Mammary epithelial cell (primary cell): ENCODE measurements at regions of chr13 and their contacts with region 1.

Region 1: DNA sequence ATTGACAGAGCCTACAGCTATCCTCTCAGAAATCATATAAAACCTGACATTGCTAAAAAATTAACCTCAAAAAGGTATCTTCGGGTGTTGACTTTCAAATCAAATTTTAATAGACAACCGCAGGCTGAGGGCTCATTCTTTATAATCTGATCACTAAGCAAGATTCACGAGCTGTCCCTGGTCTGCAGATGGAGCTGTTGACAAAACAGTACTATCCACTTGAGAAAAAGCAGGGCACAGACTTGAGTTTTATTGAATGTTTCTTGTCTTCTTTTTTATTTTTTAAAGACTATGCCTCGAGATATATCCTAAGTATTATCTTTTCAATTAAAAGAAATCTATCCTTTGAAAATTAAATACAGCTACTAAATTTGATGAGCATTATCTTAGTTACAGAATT is 540.5 kb downstream of the PCDH9 start:
- DNase-seq: no peak
- H3K4me3 ChIP-seq: no peak overlapping the region
- H3K27ac ChIP-seq: no peak overlapping the region
- H3K4me1 ChIP-seq: no peaks in the 10 kb centered on the region
- H3K27me3 ChIP-seq: no peaks in the 10 kb centered on the region
- CTCF ChIP-seq: peak; percentile 13 to 59

Region 2: GRCh38 chr13:65656740-65657329 is 1032.8 kb before region 1 on chr13:
- CTCF ChIA-PET with region 1: no interaction called
- dilution Hi-C with region 1: no loop called
- in situ Hi-C with region 1: no loop called
- intact Hi-C with region 1: loop called (anchors 10 kb)
- DNase-seq: no peak
- H3K4me3 ChIP-seq: no peak overlapping the region
- H3K27ac ChIP-seq: no peak overlapping the region
- H3K4me1 ChIP-seq: no peaks in the 10 kb centered on the region
- H3K27me3 ChIP-seq: no peaks in the 10 kb centered on the region
- CTCF ChIP-seq: peak; percentile 46 to 60

Region 3: DNA sequence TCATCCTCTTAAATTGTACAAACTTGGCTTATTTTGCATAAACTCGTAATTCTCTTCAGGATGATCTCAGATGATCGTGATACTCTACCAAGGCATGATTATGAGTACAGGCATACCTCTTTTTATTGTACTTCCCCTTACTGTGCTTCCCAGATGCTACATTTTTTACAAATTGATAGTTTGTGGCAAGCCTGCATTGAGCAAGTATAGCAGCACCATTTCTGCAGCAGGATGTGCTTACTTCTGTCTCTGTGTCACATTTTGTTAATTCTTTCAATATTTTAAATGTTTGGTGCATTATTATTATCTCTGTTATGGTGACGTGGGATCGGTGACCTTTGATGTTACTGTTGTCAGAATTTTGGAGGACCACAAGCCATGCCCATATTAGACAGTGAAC is 211.8 kb before region 1 on chr13:
- CTCF ChIA-PET with region 1: no interaction called
- dilution Hi-C with region 1: no loop called
- in situ Hi-C with region 1: no loop called
- intact Hi-C with region 1: no loop called
- DNase-seq: no peak
- H3K4me3 ChIP-seq: no peak overlapping the region
- H3K27ac ChIP-seq: no peak overlapping the region
- H3K4me1 ChIP-seq: no peaks in the 10 kb centered on the region
- H3K27me3 ChIP-seq: no peaks in the 10 kb centered on the region
- CTCF ChIP-seq: no peak

Region 4: DNA sequence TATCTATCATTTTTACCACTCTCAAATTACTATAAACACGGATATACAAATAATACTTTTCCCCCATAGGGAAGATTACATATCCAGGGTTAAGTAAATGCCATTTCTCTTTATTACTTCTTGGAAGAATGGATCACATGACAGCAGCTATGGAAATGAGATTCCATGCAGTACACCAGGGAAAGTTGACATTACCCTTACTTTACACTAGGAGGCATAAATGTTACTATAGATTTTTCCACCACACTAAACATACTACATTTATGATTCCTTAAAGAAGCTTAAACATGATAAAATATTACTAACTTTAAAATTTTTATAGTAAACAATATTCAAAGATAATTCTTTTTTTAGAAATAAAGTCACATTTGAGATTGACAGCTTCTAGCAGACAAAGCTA is 70.9 kb before region 1 on chr13:
- CTCF ChIA-PET with region 1: no interaction called
- dilution Hi-C with region 1: no loop called
- in situ Hi-C with region 1: no loop called
- intact Hi-C with region 1: loop called (anchors 1 kb)
- DNase-seq: peak; percentile 14
- H3K4me3 ChIP-seq: no peak overlapping the region
- H3K27ac ChIP-seq: no peak overlapping the region
- H3K4me1 ChIP-seq: no peaks in the 10 kb centered on the region
- H3K27me3 ChIP-seq: no peaks in the 10 kb centered on the region
- CTCF ChIP-seq: peak; percentile 50 to 64

Region 5: DNA sequence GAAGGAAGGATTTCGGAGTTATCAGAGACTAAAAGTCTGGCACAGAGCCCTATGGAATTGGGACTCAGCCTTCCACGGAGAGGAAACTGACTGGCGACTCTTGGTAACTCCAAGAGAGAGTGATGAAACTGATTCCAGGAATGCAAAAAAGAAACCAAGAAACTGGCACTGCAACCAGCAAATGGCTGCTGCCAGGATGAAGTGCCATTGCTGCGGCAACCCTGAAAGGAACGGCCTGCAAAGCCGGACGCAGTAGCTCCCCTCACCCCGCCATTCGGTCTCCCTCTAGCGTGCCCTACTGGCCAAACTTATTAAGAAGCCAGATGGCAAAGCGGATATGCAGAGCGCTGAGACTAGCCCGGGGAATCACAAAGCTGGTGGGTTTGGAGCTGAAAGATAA is 304.5 kb after region 1 on chr13:
- CTCF ChIA-PET with region 1: interaction called, 4 read pairs
- dilution Hi-C with region 1: no loop called
- in situ Hi-C with region 1: no loop called
- intact Hi-C with region 1: loop called (anchors 1 kb)
- DNase-seq: peak; percentile 66
- H3K4me3 ChIP-seq: peak overlapping the region; percentile 18 to 38 (median 23)
- H3K27ac ChIP-seq: no peak overlapping the region
- H3K4me1 ChIP-seq: peaks cover 18% of the 10 kb centered on the region
- H3K27me3 ChIP-seq: no peaks in the 10 kb centered on the region
- CTCF ChIP-seq: peak; percentile 77 to 93

Region 6: GRCh38 chr13:67052550-67053490 is 363.2 kb after region 1 on chr13:
- CTCF ChIA-PET with region 1: no interaction called
- dilution Hi-C with region 1: no loop called
- in situ Hi-C with region 1: no loop called
- intact Hi-C with region 1: loop called (anchors 10 kb)
- DNase-seq: no peak
- H3K4me3 ChIP-seq: no peak overlapping the region
- H3K27ac ChIP-seq: no peak overlapping the region
- H3K4me1 ChIP-seq: no peaks in the 10 kb centered on the region
- H3K27me3 ChIP-seq: no peaks in the 10 kb centered on the region
- CTCF ChIP-seq: no peak

Region 7: DNA sequence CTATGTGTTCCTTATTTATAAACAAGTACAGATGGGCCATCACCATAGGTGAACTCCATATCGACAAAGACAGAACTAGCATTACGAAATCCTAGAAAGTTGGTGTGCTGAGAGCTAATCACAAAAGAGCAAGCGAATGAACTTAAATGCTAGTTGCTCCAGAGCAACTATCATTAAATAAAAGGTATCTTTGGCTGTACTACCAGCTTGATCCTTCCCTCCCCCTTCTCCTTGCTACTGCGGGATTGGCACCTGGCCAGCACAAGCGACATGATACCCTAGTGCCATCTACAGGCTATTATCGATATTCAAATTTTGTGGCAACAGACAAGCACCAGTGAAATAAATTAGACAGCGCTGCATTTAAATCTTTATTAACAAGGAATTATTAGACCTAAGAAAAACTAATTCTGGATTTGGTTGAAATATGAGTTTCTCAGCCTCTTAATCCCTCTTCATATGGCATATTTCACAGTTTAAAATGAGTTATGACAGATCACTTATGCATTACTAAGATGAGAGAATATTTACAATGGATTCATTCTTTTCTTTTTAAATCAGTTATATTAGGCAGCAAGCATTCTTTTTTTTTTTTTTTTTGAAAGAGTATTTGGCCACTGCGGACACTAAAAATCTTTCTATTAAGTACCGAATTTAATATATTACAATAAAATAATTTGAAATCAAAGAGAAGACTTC is 534.7 kb after region 1 on chr13:
- CTCF ChIA-PET with region 1: no interaction called
- dilution Hi-C with region 1: no loop called
- in situ Hi-C with region 1: loop called in 1 of 2 experiments (anchors 25 kb)
- intact Hi-C with region 1: loop called (anchors 1 kb)
- DNase-seq: peak; percentile 56
- H3K4me3 ChIP-seq: no peak overlapping the region
- H3K27ac ChIP-seq: no peak overlapping the region
- H3K4me1 ChIP-seq: peaks cover 5% of the 10 kb centered on the region
- H3K27me3 ChIP-seq: peaks cover 4% of the 10 kb centered on the region
- CTCF ChIP-seq: peak; percentile 58 to 73

Region 8: DNA sequence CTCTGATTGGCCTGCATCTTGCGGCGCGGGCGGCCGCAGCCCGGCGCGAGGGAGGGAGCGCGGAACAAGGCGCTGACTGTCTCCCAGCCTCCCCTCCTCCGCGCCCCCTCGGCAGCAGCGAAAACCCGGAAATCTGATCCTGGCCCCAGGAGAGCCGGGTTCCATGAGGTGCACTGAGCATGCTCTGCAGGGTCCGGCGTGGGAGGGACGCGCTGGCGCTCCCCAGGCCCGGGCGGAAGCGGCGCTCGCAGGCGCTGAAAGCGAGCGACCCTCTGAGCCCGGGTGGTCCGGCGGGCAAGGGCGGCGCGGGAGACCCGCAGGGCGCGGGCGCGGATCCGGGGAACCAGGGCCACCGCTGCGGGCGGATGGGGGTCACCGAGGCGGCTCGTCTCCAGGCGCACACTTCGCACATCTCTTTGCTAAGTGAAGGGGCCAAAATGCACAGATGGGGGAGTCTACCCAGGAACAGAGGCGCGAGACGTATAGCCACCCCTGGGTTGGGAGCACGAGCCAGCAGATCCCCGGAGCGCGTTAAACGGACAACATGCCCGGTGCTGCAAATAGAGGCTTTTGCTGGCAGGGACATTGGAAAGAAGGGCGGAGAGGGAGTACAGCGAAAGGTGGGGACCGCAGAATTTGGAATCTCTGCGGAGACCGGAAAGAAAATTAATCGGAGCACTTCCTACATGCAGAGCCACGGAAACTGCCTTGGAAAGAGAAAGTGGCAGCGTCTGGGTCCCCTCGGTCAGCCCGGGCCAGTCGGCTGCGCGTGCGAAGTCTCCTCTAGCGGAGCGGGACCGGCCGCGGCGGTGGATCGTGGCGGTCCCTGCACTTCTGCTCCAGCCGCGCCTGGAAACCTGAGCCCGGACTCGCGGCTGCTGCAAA is 541.0 kb after region 1 on chr13:
- CTCF ChIA-PET with region 1: no interaction called
- dilution Hi-C with region 1: no loop called
- in situ Hi-C with region 1: loop called in 1 of 2 experiments (anchors 25 kb)
- intact Hi-C with region 1: no loop called
- DNase-seq: peak; percentile 94
- H3K4me3 ChIP-seq: peak overlapping the region; percentile 82 to 94 (median 84)
- H3K27ac ChIP-seq: peak overlapping the region; percentile 58
- H3K4me1 ChIP-seq: peaks cover 8% of the 10 kb centered on the region
- H3K27me3 ChIP-seq: peaks cover 4% of the 10 kb centered on the region
- CTCF ChIP-seq: no peak